CD4-positive, alpha-beta memory T cell (primary cell): ENCODE measurements at regions of chr12 and their contacts with region 1.

Region 1: DNA sequence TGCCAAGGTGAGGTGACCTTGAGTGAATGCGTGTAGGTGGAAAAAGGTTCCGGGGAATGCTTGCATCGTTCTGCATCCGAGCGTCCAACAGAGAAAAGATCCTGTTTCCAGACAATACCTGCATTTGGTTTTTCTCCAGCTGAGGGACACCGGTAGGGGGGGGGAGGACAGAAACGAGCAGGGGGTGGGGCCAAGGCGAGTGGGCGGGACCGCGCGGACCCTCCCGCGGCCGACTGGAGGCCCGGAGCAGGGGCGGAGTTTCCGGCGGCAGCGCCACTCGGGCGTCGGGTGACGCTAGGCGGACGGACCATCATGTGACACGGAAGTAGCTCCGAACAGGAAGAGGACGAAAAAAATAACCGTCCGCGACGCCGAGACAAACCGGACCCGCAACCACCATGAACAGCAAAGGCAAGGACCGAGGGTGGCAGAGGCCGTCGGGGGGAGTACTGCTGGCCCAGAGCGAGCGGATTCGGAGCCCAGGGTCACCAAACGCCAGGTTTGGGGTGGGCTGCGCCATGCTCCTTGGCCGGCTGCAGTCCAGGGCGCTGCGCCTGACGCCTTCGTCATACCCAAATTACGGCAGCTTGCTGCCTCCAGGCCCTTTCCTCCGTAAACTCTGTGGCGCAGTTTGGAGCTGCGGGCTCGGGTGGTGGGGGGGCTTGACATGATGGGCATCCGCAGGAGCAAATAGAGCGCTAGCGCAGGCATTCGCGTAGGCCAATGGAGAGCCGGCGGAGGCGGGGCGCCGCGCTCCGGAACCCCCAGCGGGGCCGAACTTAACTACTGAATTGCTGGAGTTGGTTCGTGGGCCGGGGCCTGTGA is at the start of gene DAZAP2:
- DNase-seq: peak; percentile 91 to 95 (median 94)
- H3K4me3 ChIP-seq: peak within 1 kb of the TSS; percentile 98 to 100
- H3K4me3 Mint-ChIP-seq: peak within 1 kb of the TSS; percentile 93 to 99 (median 98)
- H3K27ac ChIP-seq: peak within 1 kb of the TSS; percentile 100
- H3K27ac Mint-ChIP-seq: peak within 1 kb of the TSS; percentile 99 to 100 (median 100)
- H3K4me1 ChIP-seq: peaks cover 40% of the 10 kb centered on the region
- H3K4me1 Mint-ChIP-seq: peaks cover 27 to 57% (median 40%) of the 10 kb centered on the region in 4 donors
- H3K27me3 ChIP-seq: no peaks in the 10 kb centered on the region
- H3K27me3 Mint-ChIP-seq: peaks cover 0 to 1% of the 10 kb centered on the region in 2 donors
- total RNA-seq, gene DAZAP2: 275 to 286 TPM

Region 2: GRCh38 chr12:51025836-51026638 is 212.7 kb before region 1 on chr12 and contains the start of gene SLC11A2:
- CTCF ChIA-PET with region 1: no interaction called
- POLR2A ChIA-PET with region 1: interaction called, 20 read pairs
- intact Hi-C with region 1: no loop called
- DNase-seq: peak; percentile 89 to 93 (median 89)
- H3K4me3 ChIP-seq: peak within 1 kb of the TSS; percentile 78 to 89
- H3K4me3 Mint-ChIP-seq: peak within 1 kb of the TSS; percentile 97 to 100 (median 98)
- H3K27ac ChIP-seq: peak within 1 kb of the TSS; percentile 83
- H3K27ac Mint-ChIP-seq: peak within 1 kb of the TSS; percentile 95 to 99 (median 98)
- H3K4me1 ChIP-seq: peaks cover 41% of the 10 kb centered on the region
- H3K4me1 Mint-ChIP-seq: peaks cover 26 to 68% (median 47%) of the 10 kb centered on the region in 4 donors
- H3K27me3 ChIP-seq: no peaks in the 10 kb centered on the region
- H3K27me3 Mint-ChIP-seq: no peaks in the 10 kb centered on the region
- total RNA-seq, gene SLC11A2: 55.1 to 62.7 TPM

Region 3: GRCh38 chr12:51172515-51173431 is 65.9 kb before region 1 on chr12 and contains the start of gene TFCP2:
- CTCF ChIA-PET with region 1: no interaction called
- POLR2A ChIA-PET with region 1: interaction called, 10 read pairs
- intact Hi-C with region 1: loop called (anchors 1 kb)
- DNase-seq: peak; percentile 91 to 96 (median 92)
- H3K4me3 ChIP-seq: peak within 1 kb of the TSS; percentile 72 to 87
- H3K4me3 Mint-ChIP-seq: peak within 1 kb of the TSS in 7 of 8 donors; percentile 71 to 92 (median 85)
- H3K27ac ChIP-seq: peak within 1 kb of the TSS; percentile 96
- H3K27ac Mint-ChIP-seq: peak within 1 kb of the TSS in 6 of 7 donors; percentile 78 to 96 (median 91)
- H3K4me1 ChIP-seq: peaks cover 26% of the 10 kb centered on the region
- H3K4me1 Mint-ChIP-seq: peaks cover 10 to 22% (median 11%) of the 10 kb centered on the region in 4 donors
- H3K27me3 ChIP-seq: no peaks in the 10 kb centered on the region
- H3K27me3 Mint-ChIP-seq: no peaks in the 10 kb centered on the region
- total RNA-seq, gene TFCP2: 36.4 to 40.0 TPM

Region 4: DNA sequence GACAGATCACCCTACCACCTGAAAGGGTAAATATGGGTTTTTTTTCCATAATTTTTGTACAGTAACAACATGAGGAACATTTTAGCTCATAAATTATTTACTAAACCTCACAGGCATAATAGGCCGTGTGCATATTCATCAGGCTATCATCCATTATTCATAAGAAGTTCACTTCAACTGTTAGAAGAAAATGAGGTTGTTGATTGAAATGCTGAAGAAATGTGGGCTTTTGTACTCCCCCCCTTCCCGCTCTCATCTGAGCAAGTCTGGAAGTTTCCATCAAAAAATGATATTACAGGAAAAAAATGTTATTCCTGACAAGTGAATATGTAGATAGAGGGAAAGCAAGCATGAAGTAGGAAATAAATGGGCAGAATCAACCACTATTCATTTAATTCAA is 13.0 kb before region 1 on chr12:
- CTCF ChIA-PET with region 1: interaction called, 4 read pairs
- POLR2A ChIA-PET with region 1: interaction called, 11 read pairs
- intact Hi-C with region 1: no loop called
- DNase-seq: no peak
- H3K4me3 ChIP-seq: no peak overlapping the region
- H3K4me3 Mint-ChIP-seq: no peak overlapping the region
- H3K27ac ChIP-seq: no peak overlapping the region
- H3K27ac Mint-ChIP-seq: no peak overlapping the region
- H3K4me1 ChIP-seq: no peaks in the 10 kb centered on the region
- H3K4me1 Mint-ChIP-seq: peaks cover 0 to 5% (median 2%) of the 10 kb centered on the region in 4 donors
- H3K27me3 ChIP-seq: no peaks in the 10 kb centered on the region
- H3K27me3 Mint-ChIP-seq: no peaks in the 10 kb centered on the region

Region 5: DNA sequence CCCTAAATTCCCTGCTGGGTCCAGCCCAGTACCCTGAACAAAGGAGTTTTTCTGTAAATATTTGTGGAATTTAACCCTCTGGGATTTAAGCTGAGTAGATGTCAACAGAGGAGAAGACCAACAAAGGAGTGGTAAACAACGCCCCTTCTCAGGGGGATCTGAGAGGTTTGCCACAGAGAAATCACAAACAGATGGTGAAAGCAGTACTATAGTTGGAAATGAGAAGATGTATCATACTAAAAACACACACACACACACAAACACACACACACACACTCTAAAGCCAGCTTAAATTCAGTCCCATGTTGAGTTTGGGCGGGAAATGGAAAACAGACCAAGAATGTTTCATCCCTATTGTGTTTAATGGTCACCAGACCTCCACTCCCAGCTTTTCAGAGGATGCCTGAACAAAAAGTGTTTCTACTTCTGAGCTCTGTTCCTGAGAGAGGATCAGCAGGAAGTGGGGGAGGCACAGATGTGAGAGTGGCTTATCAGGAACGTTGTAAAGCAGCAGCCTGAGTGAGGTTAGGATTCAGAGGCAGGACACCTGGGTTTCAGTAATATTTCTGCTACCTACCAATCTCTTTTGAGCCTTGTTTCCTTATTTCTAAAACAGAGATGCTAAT is 82.1 kb after region 1 on chr12:
- CTCF ChIA-PET with region 1: no interaction called
- POLR2A ChIA-PET with region 1: interaction called, 20 read pairs
- intact Hi-C with region 1: no loop called
- DNase-seq: peak in 1 of 5 donors; percentile 29
- H3K4me3 ChIP-seq: peak overlapping the region; percentile 61 to 73
- H3K4me3 Mint-ChIP-seq: peak overlapping the region; percentile 82 to 99 (median 96)
- H3K27ac ChIP-seq: peak overlapping the region; percentile 94
- H3K27ac Mint-ChIP-seq: peak overlapping the region; percentile 95 to 98 (median 98)
- H3K4me1 ChIP-seq: peaks cover 78% of the 10 kb centered on the region
- H3K4me1 Mint-ChIP-seq: peaks cover 53 to 93% (median 72%) of the 10 kb centered on the region in 4 donors
- H3K27me3 ChIP-seq: no peaks in the 10 kb centered on the region
- H3K27me3 Mint-ChIP-seq: no peaks in the 10 kb centered on the region

Region 6: GRCh38 chr12:51488281-51488680 is 249.6 kb after region 1 on chr12:
- CTCF ChIA-PET with region 1: no interaction called
- POLR2A ChIA-PET with region 1: no interaction called
- intact Hi-C with region 1: no loop called
- DNase-seq: no peak
- H3K4me3 ChIP-seq: no peak overlapping the region
- H3K4me3 Mint-ChIP-seq: no peak overlapping the region
- H3K27ac ChIP-seq: no peak overlapping the region
- H3K27ac Mint-ChIP-seq: no peak overlapping the region
- H3K4me1 ChIP-seq: peaks cover 19% of the 10 kb centered on the region
- H3K4me1 Mint-ChIP-seq: peaks cover 16 to 25% (median 18%) of the 10 kb centered on the region in 4 donors
- H3K27me3 ChIP-seq: no peaks in the 10 kb centered on the region
- H3K27me3 Mint-ChIP-seq: peaks cover 0 to 1% of the 10 kb centered on the region in 2 donors

Region 7: GRCh38 chr12:52258335-52258901 is 1019.7 kb after region 1 on chr12:
- CTCF ChIA-PET with region 1: no interaction called
- POLR2A ChIA-PET with region 1: no interaction called
- intact Hi-C with region 1: no loop called
- DNase-seq: no peak
- H3K4me3 ChIP-seq: no peak overlapping the region
- H3K4me3 Mint-ChIP-seq: no peak overlapping the region
- H3K27ac ChIP-seq: no peak overlapping the region
- H3K27ac Mint-ChIP-seq: no peak overlapping the region
- H3K4me1 ChIP-seq: no peaks in the 10 kb centered on the region
- H3K4me1 Mint-ChIP-seq: peaks cover 2 to 14% (median 5%) of the 10 kb centered on the region in 4 donors
- H3K27me3 ChIP-seq: no peaks in the 10 kb centered on the region
- H3K27me3 Mint-ChIP-seq: peaks cover 42 to 54% of the 10 kb centered on the region in 2 donors